ENCODE measurements at regions of chr1 and their contacts with region 1.

Region 1: GRCh38 chr1:156212833-156213643 is at the start of gene PMF1:
- DNase-seq: peak; percentile 98 to 99
- H3K4me3 ChIP-seq: peak within 1 kb of the TSS; percentile 56 to 64
- H3K27ac ChIP-seq: peak within 1 kb of the TSS; percentile 86 to 89
- H3K4me1 ChIP-seq: peaks cover 0 to 26% (median 19%) of the 10 kb centered on the region in 4 donors
- H3K27me3 ChIP-seq: no peaks in the 10 kb centered on the region
- CTCF ChIP-seq: no peak

Region 2: DNA sequence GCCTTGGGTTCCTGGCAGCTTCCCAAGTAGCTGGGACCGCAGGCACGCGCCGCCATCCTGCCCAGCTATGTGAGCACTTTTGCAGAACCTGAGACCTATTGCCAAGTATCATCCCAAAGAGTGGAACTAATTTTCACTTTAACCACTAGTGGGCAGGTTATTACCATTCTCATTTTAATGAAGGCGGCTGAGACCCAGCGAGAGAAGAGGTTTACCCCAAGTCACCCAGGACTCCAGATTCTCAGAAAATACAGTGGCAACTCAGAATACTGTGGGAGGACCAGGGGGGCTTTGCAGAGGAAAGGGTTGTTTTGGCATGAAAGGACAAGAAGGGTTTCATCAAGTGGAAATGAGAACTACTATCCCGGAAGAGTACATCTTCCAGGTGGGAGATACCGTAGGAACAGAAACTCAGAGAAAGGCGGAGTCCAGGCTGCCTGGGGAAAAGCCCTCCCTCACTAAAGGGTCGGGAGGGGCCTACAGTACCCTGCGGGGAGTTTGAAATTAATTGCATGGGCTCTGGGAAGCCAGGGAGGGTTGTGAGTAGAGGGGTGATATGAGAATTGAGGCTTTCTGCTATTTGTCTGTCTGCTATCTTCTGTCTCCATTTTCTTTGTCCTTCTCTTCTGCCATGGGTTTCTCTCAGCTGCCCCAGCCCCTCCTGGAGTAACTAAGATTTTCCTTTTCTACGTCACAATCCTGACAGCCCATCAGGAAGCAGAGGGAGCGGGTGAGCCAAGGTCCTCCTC is 66.8 kb before region 1 on chr1:
- intact Hi-C with region 1: loop called (anchors 5 kb)
- DNase-seq: peak; percentile 76 to 85
- H3K4me3 ChIP-seq: no peak overlapping the region
- H3K27ac ChIP-seq: peak overlapping the region; percentile 31 to 33
- H3K4me1 ChIP-seq: peaks cover 0 to 69% (median 27%) of the 10 kb centered on the region in 4 donors
- H3K27me3 ChIP-seq: peaks cover 0 to 9% of the 10 kb centered on the region in 2 donors
- CTCF ChIP-seq: peak; percentile 61 to 70

Region 3: GRCh38 chr1:156193488-156194299 is 19.3 kb before region 1 on chr1 and contains the start of gene SLC25A44:
- intact Hi-C with region 1: loop called (anchors 1 kb)
- DNase-seq: peak; percentile 96 to 99
- H3K4me3 ChIP-seq: peak within 1 kb of the TSS; percentile 70 to 83
- H3K27ac ChIP-seq: peak within 1 kb of the TSS; percentile 71 to 76
- H3K4me1 ChIP-seq: peaks cover 0 to 32% (median 15%) of the 10 kb centered on the region in 4 donors
- H3K27me3 ChIP-seq: no peaks in the 10 kb centered on the region
- CTCF ChIP-seq: peak; percentile 52 to 55

Region 4: DNA sequence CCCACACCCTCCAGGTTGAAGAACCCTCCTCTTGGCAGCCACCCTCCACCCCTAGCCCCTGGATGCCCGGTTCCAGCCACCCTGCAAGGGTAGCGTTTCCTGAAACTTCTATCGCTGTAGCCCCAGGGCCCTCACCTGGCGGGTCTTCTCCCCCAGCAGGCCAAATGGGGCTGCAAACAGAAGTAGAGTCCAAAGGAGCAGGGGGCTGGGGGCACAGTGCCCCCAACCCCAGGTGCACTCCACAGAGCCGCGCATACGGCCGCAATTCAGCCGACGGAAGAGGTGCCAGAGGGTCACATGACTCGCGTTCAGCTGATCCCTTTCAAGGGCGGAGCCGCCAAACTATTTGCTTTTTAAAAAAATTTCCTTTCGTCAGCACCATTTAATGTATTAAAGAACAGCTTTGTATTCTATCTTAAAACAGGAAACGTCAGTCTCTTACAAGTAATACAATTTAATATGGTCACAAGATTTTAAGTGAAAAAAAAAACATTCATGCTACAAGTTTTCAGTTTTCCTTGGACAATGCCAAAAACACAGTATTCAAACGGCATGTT is 82.4 kb after region 1 on chr1 and contains the start of gene GLMP:
- intact Hi-C with region 1: no loop called
- DNase-seq: peak; percentile 77 to 83
- H3K4me3 ChIP-seq: peak within 1 kb of the TSS; percentile 73 to 75
- H3K27ac ChIP-seq: peak within 1 kb of the TSS; percentile 69 to 83
- H3K4me1 ChIP-seq: peaks cover 0 to 35% (median 26%) of the 10 kb centered on the region in 4 donors
- H3K27me3 ChIP-seq: no peaks in the 10 kb centered on the region
- CTCF ChIP-seq: no peak

Region 5: DNA sequence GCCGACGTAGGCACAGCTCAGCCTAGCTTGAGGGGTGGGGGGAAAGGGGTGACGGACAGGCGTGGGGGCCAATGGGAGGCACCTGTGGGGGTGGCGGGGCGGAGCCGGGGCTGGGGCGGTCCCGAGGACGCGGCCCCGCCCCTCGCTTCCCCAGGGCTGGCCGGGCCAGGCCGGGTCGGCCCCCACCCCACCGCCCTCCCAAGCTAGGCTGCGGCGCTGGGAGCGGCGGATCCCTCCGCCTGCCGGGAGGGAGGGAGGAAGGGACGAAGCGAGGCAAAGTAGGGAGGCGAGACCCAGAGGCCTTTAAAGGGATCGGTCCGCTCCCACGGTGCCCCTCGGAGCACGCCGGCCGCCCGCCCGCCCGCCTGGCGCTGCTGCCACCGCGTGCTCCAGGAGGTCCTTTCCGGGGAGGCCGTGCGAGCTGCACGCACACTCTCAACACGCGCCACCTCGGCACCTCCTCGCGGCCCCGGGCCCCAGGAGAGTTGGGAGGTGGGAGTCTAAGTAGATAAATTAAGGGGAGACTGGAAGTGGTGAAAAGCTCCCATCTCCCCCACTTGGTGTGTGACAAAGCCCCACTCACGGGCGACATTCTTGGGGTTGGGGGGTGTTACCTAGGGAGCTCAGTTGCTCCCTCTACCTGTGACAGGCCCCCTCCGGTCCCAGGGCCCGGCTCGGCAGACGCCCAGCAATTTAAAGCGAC is 287.9 kb after region 1 on chr1:
- intact Hi-C with region 1: no loop called
- DNase-seq: peak; percentile 92 to 97
- H3K4me3 ChIP-seq: peak overlapping the region; percentile 78 to 99
- H3K27ac ChIP-seq: peak overlapping the region; percentile 94 to 100
- H3K4me1 ChIP-seq: peaks cover 0 to 74% (median 62%) of the 10 kb centered on the region in 4 donors
- H3K27me3 ChIP-seq: no peaks in the 10 kb centered on the region
- CTCF ChIP-seq: peak in 1 of 2 experiments; percentile 37

Measured in tibial artery (tissue), 4 donors.